ENCODE measurements at regions of chr16 and their contacts with region 1.

Region 1: DNA sequence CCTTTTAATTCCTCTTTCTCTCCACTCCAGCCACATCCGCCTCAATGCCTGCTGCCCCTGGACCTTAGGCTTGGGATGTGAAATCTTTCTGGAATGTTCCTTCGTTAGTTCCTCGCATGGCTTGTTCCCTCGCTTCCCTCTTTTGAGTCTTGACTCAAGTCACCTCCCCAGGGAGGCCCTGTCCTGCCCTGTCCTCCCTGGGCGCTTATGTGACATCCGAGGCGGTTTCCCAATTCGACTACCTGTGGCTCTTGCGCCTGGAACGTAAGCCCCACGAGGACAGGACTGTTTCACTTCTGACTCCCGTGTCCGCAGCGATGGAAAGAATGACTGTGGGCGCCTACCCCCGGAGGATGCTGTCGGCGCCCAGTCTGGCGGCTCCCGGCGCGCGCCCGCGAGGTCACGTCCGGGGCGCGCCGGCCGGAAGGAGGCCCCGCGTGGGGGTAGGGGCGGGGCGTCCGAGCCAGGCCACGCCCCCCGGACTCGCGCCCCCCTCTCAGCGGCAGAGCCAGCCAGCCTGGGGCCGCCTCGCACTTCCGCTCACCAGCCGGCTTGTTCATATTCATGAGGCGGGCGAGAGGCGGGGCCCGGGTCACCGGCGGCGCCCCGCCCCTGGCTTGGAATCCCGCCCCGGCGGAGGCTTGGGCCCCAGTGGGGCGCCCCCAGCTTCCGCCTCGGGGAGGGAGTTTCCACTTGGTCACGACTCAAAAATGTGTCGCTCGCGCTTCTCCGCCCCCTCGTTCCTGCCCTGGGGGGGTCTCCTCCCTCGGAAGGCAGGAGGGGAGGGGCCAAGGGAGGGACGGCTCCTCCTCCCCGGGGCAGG is 8.4 kb upstream of the GLIS2 start:
- DNase-seq: peak; percentile 90 to 94
- H3K4me3 ChIP-seq: peak overlapping the region; percentile 64 to 84 (median 80)
- H3K27ac ChIP-seq: peak overlapping the region; percentile 46; the same call in 1 of the 2 replicates
- H3K4me1 ChIP-seq: peaks cover 0 to 20% (median 13%) of the 10 kb centered on the region in 4 experiments; a peak in 6 of 7 replicates
- H3K27me3 ChIP-seq: no peaks in the 10 kb centered on the region
- CTCF ChIP-seq: no peak
- EP300 ChIP-seq: peak in 1 of 2 experiments; percentile 17; a peak in 1 of 3 replicates
- POLR2A ChIP-seq: no peak
- RAD21 ChIP-seq: no peak

Region 2: DNA sequence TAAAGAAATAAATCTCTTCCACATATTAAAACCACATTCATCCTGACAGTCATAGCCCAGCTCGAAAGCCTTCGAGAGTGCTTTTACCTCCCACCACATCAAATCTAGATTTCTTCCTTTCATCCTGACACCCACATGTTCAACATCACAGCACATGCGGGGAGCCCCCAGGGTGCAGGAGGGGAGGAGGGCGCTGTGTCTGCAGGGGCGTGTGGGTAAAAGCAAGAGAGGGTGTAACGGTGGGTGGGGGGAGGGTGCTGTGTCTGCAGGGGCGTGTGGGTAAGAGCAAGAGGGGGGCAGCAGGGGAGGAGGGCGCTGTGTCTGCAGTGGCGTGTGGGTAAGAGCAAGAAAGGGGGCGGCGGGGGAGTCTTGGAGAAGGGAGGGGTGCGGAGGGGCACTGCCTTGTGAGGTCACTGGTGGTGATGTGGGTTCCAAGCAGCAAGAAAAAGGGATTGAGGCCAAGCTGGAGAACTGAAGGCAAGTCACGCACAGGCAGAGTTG is 225.9 kb before region 1 on chr16:
- CTCF ChIA-PET with region 1: no interaction called
- POLR2A ChIA-PET with region 1: no interaction called
- DNase-seq: no peak
- H3K4me3 ChIP-seq: no peak overlapping the region
- H3K27ac ChIP-seq: no peak overlapping the region
- H3K4me1 ChIP-seq: peaks cover 0 to 8% (median 4%) of the 10 kb centered on the region in 4 experiments; a peak in 4 of 7 replicates
- H3K27me3 ChIP-seq: no peaks in the 10 kb centered on the region
- CTCF ChIP-seq: no peak
- EP300 ChIP-seq: no peak
- POLR2A ChIP-seq: no peak
- RAD21 ChIP-seq: no peak

Region 3: GRCh38 chr16:4176612-4177417 is 130.6 kb before region 1 on chr16:
- CTCF ChIA-PET with region 1: no interaction called
- POLR2A ChIA-PET with region 1: no interaction called
- DNase-seq: no peak
- H3K4me3 ChIP-seq: no peak overlapping the region
- H3K27ac ChIP-seq: no peak overlapping the region
- H3K4me1 ChIP-seq: peaks cover 0 to 3% (median 2%) of the 10 kb centered on the region in 4 experiments; a peak in 2 of 7 replicates
- H3K27me3 ChIP-seq: no peaks in the 10 kb centered on the region; a peak in 1 of 7 replicates
- CTCF ChIP-seq: no peak
- EP300 ChIP-seq: no peak
- POLR2A ChIP-seq: no peak
- RAD21 ChIP-seq: no peak

Region 4: DNA sequence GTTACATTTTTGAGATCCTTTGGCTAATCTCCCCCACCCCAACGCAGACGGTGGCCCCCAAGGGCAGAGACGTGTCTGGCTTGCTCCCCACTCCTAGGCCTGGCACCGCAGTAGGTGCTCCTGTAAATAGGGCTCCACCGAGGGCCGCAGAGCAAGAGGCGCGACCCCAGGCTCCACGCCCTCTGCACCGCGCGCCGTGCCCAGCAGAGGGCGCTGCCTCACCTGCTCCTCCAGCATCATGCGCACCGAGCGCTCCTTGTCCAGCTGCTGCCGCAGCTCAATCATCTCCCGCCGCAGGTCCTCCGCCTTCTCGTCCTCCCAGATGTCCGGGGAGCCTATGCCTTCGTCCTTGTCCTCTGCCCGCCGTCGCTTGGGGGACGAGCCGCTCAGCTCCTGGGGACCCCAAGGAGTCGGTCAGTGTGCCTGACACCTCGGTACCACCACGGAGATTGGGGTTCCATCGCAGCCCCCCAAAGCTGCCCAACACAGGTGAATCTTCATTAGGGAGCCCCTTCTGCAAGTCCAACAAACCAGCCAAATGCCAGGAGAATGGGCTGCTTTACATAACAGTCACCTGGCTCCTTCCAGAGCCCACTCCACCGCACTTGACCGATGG is 45.8 kb before region 1 on chr16:
- CTCF ChIA-PET with region 1: interaction called, 51 read pairs
- POLR2A ChIA-PET with region 1: interaction called, 403 read pairs
- DNase-seq: peak in 1 of 2 experiments; percentile 95
- H3K4me3 ChIP-seq: no peak overlapping the region
- H3K27ac ChIP-seq: no peak overlapping the region
- H3K4me1 ChIP-seq: peaks cover 0 to 11% (median 8%) of the 10 kb centered on the region in 4 experiments; a peak in 5 of 7 replicates
- H3K27me3 ChIP-seq: no peaks in the 10 kb centered on the region
- CTCF ChIP-seq: peak; percentile 86 to 98 (median 97)
- EP300 ChIP-seq: no peak
- POLR2A ChIP-seq: no peak
- RAD21 ChIP-seq: peak; percentile 80 to 83

Region 5: DNA sequence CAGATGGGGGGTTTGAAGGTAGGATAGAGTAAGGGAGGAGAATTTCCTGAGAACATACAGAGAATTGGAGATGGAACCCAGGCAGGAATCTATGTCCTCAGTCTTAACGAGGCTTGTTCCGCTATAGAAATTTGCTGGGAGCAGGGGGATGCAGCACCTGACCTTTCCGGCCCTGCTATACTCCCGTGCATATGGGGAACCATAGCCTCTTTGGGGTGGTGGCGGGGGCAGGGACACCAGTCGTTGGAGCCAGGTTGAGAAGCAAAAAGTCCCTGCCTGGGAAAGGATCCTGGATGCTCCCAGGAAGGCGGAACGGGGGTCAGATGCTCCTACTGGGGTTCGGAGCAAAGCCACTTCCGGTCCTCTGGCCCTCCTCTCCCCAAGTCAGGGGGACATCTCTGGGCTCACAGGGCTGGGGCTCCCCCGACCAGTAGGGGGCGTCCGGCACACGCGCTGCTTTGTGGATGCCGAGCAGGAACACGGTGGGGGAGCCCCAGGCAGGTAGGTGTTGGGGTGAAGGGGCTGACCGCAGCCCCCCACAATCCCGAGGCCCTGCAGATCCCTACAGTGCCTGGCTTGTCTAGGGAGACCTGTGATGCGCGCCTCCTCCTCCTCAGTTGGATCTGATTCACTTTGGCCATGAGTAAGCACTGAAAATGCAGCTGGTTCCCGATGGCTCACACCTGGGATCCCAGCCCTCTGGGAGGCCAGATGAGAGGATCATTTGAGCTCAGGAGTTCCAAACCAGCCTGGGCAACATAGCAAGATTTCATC is 19.1 kb before region 1 on chr16:
- CTCF ChIA-PET with region 1: interaction called, 300 read pairs
- POLR2A ChIA-PET with region 1: interaction called, 93 read pairs
- DNase-seq: peak in 1 of 2 experiments; percentile 98
- H3K4me3 ChIP-seq: peak overlapping the region in 2 of 4 experiments; percentile 2 to 16; a peak in 2 of 8 replicates
- H3K27ac ChIP-seq: peak overlapping the region; percentile 38; the same call in 1 of the 2 replicates
- H3K4me1 ChIP-seq: peaks cover 3 to 17% (median 8%) of the 10 kb centered on the region in 4 experiments
- H3K27me3 ChIP-seq: no peaks in the 10 kb centered on the region
- CTCF ChIP-seq: peak; percentile 94 to 98 (median 98)
- EP300 ChIP-seq: no peak
- POLR2A ChIP-seq: no peak
- RAD21 ChIP-seq: peak; percentile 84 to 93

Region 6: DNA sequence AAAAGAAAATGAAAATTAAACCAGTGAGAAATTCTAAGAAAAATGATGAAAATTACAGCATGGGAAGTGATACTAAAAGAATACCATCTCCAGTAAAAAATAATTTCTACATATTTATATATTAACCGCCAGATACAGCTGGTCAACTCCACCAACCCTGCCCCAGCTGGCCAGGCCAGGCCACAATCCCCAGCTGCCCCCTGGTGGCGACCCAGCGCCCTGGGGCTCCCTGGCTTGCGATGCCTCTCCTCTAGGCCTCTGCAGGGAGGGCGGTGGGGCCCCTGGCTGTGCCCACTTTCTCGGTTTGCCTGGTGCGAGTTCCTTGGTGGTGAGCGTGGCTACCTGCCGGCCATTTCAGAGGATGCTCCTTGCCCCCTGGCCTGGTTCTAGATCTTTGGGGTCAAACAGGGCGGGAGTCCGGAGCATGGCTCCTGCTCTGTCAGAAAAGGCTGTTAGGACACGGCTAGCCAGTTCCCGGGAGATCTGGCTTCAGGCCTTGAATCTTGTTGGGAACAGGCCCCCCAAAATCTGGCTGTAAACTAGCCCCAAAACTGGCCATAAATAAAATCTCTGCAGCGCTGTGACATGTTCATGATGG is 22.9 kb after region 1 on chr16:
- CTCF ChIA-PET with region 1: interaction called, 182 read pairs
- POLR2A ChIA-PET with region 1: interaction called, 80 read pairs
- DNase-seq: peak in 1 of 2 experiments; percentile 91
- H3K4me3 ChIP-seq: no peak overlapping the region
- H3K27ac ChIP-seq: no peak overlapping the region
- H3K4me1 ChIP-seq: peaks cover 5 to 14% (median 10%) of the 10 kb centered on the region in 4 experiments
- H3K27me3 ChIP-seq: no peaks in the 10 kb centered on the region
- CTCF ChIP-seq: peak; percentile 84 to 98 (median 97)
- EP300 ChIP-seq: no peak
- POLR2A ChIP-seq: no peak
- RAD21 ChIP-seq: peak; percentile 86 to 94

Region 7: GRCh38 chr16:4350787-4351659 is 43.6 kb after region 1 on chr16 and contains the start of gene PAM16:
- CTCF ChIA-PET with region 1: interaction called, 14 read pairs
- POLR2A ChIA-PET with region 1: interaction called, 10 read pairs
- DNase-seq: peak; percentile 87 to 100
- H3K4me3 ChIP-seq: peak within 1 kb of the TSS; percentile 91 to 97 (median 96)
- H3K27ac ChIP-seq: peak within 1 kb of the TSS; percentile 85
- H3K4me1 ChIP-seq: peaks cover 0 to 4% (median 0%) of the 10 kb centered on the region in 4 experiments; a peak in 1 of 7 replicates
- H3K27me3 ChIP-seq: peaks cover 0 to 2% (median 0%) of the 10 kb centered on the region in 4 experiments; a peak in 1 of 7 replicates
- CTCF ChIP-seq: no peak
- EP300 ChIP-seq: no peak
- POLR2A ChIP-seq: peak in 1 of 2 experiments; percentile 76; a peak in 2 of 3 replicates
- RAD21 ChIP-seq: no peak
- total RNA-seq, gene PAM16: 78.3 and 84.4 TPM in 2 replicates

Region 8: DNA sequence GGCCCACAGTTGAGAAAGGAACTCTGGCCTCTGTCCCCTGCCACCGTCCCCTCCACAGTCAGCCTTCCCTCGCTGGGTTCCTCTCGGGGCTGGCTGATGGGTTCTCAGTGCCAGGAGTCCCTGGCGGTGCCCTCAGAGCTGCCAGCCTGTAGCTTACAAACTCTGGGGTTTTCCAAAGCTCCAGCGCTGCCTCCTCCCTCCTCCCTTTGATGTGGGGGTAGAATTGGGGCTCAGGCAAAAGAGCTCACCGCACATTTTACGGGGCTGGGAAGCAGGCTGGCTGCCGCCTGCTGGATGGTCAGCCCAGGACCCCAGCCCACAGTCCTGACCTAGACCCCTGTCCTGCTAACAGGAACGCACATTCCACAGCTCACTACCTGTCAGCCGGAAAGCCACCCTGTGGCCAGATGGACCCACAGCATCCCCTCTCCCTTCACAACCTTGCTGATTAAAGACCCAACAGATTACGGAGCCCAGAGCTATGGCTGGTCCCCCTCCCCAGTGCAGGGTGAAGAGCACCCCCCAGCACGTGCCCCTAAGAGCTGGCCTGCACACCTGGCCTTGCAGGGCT is 70.2 kb after region 1 on chr16:
- CTCF ChIA-PET with region 1: interaction called, 11 read pairs
- POLR2A ChIA-PET with region 1: interaction called, 3 read pairs
- DNase-seq: no peak
- H3K4me3 ChIP-seq: no peak overlapping the region
- H3K27ac ChIP-seq: no peak overlapping the region
- H3K4me1 ChIP-seq: peaks cover 4 to 58% (median 50%) of the 10 kb centered on the region in 4 experiments
- H3K27me3 ChIP-seq: no peaks in the 10 kb centered on the region
- CTCF ChIP-seq: peak in 2 of 3 experiments; percentile 43 to 62; a peak in 3 of 4 replicates
- EP300 ChIP-seq: no peak
- POLR2A ChIP-seq: no peak
- RAD21 ChIP-seq: peak; percentile 36 to 44